B cell (primary cell): ENCODE measurements at regions of chr17 and their contacts with region 1.

Region 1: DNA sequence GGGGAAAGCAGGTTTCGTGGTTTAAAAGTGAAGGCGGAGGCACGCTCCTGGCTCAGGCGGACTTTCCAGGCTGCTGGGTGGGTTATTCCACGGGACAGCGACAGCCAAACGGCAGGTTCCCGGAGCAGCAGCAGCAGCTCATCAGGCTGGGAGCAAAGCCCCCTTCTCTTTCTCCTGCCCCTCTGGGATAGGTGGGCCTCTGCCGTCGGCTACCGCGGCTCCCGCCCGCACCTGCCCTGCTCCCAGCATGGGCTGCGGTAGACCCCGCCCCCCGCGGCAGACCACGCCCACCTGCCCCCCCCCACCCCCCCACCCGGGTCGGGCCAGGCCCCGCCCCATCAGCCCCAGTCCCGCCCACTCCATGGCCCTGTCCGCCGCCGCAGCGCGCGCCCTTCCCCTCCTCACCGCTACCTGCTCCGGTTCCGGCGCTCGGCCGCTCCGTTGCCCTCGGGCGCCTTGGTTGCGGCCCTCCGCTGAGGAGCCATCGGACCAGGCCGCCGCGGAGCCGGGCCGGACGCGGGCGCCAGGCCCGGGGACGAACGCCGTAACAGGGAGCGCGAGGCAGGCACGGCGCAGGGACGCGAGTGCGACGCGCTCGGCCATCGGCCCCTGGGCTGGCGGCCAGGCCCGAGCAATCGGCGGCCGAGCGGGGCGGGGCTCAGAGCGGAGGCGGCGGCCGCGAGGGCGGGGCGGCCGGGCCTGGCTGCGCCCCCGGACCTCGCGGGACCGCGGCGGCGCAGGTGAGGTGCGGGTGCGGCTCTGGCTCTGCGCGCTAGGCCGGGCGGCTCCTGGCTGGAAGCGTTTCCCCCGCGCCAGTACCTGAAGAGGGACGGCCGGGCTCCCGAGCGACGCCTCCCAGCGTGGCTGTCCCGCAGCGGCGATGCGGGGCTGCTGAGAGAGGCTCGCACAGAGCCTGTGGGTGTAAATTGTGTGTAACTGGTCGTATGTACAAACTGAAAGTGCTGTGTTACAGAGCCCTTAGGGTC is at the starts of genes HEXD and OGFOD3:
- DNase-seq: peak; percentile 96
- ATAC-seq: peak; percentile 85
- H3K4me3 ChIP-seq: peak within 1 kb of the TSS; percentile 55 to 90 (median 73)
- H3K4me3 Mint-ChIP-seq: peak within 1 kb of the TSS; percentile 89
- H3K27ac ChIP-seq: peak within 1 kb of the TSS in 1 of 2 donors; percentile 74
- H3K27ac Mint-ChIP-seq: peak within 1 kb of the TSS; percentile 87
- H3K4me1 ChIP-seq: peaks cover 18 to 27% of the 10 kb centered on the region in 2 donors
- H3K4me1 Mint-ChIP-seq: peaks cover 23% of the 10 kb centered on the region
- H3K27me3 ChIP-seq: no peaks in the 10 kb centered on the region
- H3K27me3 Mint-ChIP-seq: no peaks in the 10 kb centered on the region
- CTCF ChIP-seq: no peak
- total RNA-seq, gene HEXD: 128 TPM in 2 replicates
- total RNA-seq, gene OGFOD3: 30.5 and 35.0 TPM in 2 replicates

Region 2: DNA sequence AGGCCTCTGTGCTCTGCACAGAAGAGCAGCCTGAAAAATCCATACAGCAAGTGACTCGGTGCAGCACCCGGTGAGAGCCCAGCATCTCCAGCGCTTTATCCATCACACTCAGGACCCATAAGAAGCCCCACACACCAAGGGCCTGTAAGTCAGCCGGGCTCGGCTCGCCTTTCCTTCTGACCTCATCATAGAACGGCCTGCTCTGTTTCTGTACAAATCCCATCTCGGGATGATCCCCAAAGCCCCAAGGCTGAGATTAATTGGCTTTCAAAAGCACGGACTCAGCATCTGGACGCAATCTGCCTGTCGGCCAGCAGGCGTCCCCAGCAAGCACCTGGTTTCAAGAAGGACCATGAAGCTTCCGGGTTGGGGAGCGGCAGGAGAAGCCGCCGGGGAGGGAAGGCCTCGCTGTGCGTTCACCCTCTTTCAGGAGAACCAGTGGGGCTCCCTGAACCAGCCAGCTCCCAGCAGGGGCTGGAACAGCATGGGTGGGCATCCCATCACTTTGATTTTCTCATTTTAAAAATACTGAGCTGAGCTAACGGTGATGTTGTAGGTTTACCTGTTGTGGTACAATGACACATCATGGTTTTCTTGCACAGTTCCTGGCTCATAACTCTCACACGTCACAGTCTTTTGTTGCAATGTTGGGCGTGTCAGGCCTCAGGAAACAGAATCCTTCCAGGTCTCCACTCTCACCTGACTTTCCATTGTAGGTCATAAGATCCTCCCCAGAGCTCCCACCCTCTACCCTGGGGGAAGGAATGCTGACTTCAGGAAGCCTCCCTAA is 212.4 kb before region 1 on chr17:
- CTCF ChIA-PET with region 1: no interaction called
- POLR2A ChIA-PET with region 1: no interaction called
- intact Hi-C with region 1: loop called (anchors 10 kb)
- DNase-seq: peak; percentile 89
- ATAC-seq: peak; percentile 98
- H3K4me3 ChIP-seq: peak overlapping the region in 3 of 5 experiments; percentile 3 to 34 (median 21)
- H3K4me3 Mint-ChIP-seq: peak overlapping the region; percentile 54
- H3K27ac ChIP-seq: peak overlapping the region; percentile 73
- H3K27ac Mint-ChIP-seq: peak overlapping the region; percentile 90
- H3K4me1 ChIP-seq: peaks cover 10 to 11% of the 10 kb centered on the region in 2 donors
- H3K4me1 Mint-ChIP-seq: peaks cover 19% of the 10 kb centered on the region
- H3K27me3 ChIP-seq: no peaks in the 10 kb centered on the region
- H3K27me3 Mint-ChIP-seq: no peaks in the 10 kb centered on the region
- CTCF ChIP-seq: peak; percentile 93

Region 3: GRCh38 chr17:82351716-82352488 is 66.4 kb before region 1 on chr17:
- CTCF ChIA-PET with region 1: interaction called, 5 read pairs
- POLR2A ChIA-PET with region 1: interaction called, 5 read pairs
- intact Hi-C with region 1: loop called (anchors 2 kb)
- DNase-seq: peak; percentile 89
- ATAC-seq: peak; percentile 90
- H3K4me3 ChIP-seq: no peak overlapping the region
- H3K4me3 Mint-ChIP-seq: no peak overlapping the region
- H3K27ac ChIP-seq: no peak overlapping the region
- H3K27ac Mint-ChIP-seq: no peak overlapping the region
- H3K4me1 ChIP-seq: peaks cover 10 to 14% of the 10 kb centered on the region in 2 donors
- H3K4me1 Mint-ChIP-seq: peaks cover 5% of the 10 kb centered on the region
- H3K27me3 ChIP-seq: peaks cover 0 to 27% (median 6%) of the 10 kb centered on the region in 4 experiments
- H3K27me3 Mint-ChIP-seq: peaks cover 13% of the 10 kb centered on the region
- CTCF ChIP-seq: peak; percentile 97

Region 4: GRCh38 chr17:82457997-82458864 is 39.9 kb after region 1 on chr17 and contains the start of gene NARF:
- CTCF ChIA-PET with region 1: no interaction called
- POLR2A ChIA-PET with region 1: no interaction called
- intact Hi-C with region 1: loop called (anchors 1 kb)
- DNase-seq: peak; percentile 97
- ATAC-seq: peak; percentile 96
- H3K4me3 ChIP-seq: peak within 1 kb of the TSS; percentile 53 to 82 (median 74)
- H3K4me3 Mint-ChIP-seq: peak within 1 kb of the TSS; percentile 81
- H3K27ac ChIP-seq: peak within 1 kb of the TSS; percentile 91 to 99
- H3K27ac Mint-ChIP-seq: peak within 1 kb of the TSS; percentile 90
- H3K4me1 ChIP-seq: peaks cover 13 to 19% of the 10 kb centered on the region in 2 donors
- H3K4me1 Mint-ChIP-seq: peaks cover 19% of the 10 kb centered on the region
- H3K27me3 ChIP-seq: no peaks in the 10 kb centered on the region
- H3K27me3 Mint-ChIP-seq: no peaks in the 10 kb centered on the region
- CTCF ChIP-seq: no peak
- total RNA-seq, gene NARF: 103 and 104 TPM in 2 replicates

Region 5: DNA sequence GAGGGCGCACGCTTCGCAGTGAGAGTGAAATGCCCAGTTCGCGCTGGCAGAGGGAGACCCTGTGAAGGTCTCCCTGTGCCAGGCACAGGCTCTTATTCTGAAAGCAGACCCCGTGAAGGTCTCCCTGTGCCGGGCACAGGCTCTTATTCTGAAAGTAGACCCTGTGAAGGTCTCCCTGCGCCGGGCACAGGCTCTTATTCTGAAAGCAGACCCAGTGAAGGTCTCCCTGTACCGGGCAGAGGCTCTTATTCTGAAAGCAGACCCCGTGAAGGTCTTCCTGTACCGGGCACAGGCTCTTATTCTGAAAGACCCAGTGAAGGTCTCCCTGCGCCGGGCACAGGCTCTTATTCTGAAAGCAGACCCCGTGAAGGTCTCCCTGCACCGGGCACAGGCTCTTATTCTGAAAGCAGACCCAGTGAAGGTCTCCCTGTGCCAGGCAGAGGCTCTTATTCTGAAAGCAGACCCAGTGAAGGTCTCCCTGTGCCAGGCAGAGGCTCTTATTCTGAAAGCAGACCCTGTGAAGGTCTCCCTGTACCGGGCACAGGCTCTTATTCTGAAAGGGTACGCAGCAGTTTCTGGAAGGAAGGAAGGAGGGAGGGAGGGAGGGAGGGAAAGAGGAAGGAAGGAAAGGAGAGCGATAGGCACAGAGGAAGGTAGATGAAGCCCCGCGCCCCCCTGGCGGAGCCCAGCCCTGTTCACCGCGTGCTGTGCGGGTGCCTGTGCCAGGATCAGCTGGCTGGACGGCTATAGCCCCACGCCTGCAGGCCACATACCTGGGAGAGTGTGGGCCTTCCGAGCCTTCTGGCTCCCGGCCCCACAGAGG is 174.7 kb after region 1 on chr17:
- CTCF ChIA-PET with region 1: no interaction called
- POLR2A ChIA-PET with region 1: no interaction called
- intact Hi-C with region 1: loop called (anchors 2 kb)
- DNase-seq: peak; percentile 85
- ATAC-seq: peak; percentile 42
- H3K4me3 ChIP-seq: peak overlapping the region in 4 of 5 experiments; percentile 45 to 61 (median 55)
- H3K4me3 Mint-ChIP-seq: peak overlapping the region; percentile 77
- H3K27ac ChIP-seq: peak overlapping the region; percentile 65 to 66
- H3K27ac Mint-ChIP-seq: peak overlapping the region; percentile 74
- H3K4me1 ChIP-seq: peaks cover 27 to 52% of the 10 kb centered on the region in 2 donors
- H3K4me1 Mint-ChIP-seq: peaks cover 50% of the 10 kb centered on the region
- H3K27me3 ChIP-seq: no peaks in the 10 kb centered on the region
- H3K27me3 Mint-ChIP-seq: no peaks in the 10 kb centered on the region
- CTCF ChIP-seq: no peak